Ascending aorta (tissue), 2 donors: ENCODE measurements at regions of chr18 and their contacts with region 1.

Region 1: DNA sequence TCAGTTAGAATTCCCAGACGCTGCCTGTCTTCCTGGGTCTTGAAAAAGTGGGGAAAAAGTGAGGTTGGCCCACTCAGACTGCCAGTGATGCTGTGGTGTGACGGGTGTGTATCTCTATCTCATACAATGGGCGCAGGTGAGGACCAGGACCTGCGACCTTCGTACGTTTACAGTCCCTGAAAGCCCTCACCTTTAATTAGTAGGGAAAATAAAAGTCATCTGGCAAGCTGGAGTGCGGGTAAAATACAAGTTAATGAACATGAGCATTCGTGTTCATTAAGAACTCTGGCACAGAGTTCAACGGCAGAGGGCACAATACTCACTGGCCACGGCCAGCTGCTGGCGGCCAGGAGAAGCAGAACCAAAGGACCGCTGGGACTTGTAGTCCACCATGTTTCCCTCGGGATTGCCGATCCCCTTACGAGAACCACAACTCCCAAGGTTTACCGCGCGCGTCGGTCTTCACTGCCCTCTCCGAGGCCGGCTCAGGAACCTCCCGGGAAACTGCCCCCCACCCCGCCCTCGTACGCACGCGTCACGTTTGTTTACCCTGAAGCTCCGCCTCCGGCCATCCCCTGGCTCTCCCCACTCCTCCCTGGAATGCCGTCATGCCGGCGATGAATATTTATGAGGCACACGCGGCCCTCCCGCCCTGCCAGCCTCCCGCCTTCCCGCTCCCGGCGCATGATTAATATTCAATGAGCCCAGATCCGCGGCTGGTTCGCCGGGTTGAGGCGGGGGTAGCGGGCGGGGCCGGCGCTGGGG is 488 bp upstream of the PHLPP1 start:
- DNase-seq: peak; percentile 98 to 100
- H3K4me3 ChIP-seq: peak overlapping the region; percentile 78 to 81
- H3K27ac ChIP-seq: peak overlapping the region; percentile 93 to 95
- H3K4me1 ChIP-seq: peaks cover 0 to 5% of the 10 kb centered on the region in 2 donors
- H3K27me3 ChIP-seq: no peaks in the 10 kb centered on the region
- CTCF ChIP-seq: peak; percentile 56 to 80 (median 78)

Region 2: DNA sequence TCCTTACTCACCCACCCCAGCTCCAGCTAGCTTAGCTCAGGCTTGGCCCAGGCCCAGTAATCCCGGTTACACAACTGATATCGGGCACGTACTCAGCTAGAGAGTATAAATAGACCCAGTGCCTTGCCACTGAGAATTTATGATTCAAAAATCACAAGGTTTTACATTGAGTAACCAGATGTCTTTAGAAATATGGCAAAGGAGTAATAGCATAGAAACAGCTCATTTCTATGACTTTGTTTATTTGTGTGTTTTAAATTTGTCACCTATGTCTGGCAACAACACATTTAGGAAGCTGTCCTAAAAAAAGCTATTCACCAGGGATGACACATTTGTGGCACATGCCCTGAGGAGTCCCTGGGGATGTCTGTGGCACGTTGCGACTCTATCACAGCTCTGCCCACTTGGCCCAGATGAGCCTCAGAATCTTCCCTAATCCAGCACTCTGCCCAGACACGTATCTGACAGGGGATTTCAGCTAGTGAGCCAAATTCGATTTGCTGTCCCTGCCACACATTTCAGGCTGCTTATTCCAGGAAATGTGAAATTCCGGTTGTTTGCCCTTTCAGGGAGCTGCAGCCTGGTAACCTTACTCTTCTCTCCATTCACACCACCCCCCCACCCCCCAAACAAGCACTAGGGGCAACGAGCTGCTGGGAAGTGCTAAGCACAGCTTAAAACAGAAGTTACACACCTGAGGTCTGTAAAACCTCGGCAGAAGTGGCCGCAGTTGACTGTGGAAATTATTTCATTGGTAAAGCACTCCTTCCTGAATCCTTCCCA is 277.4 kb before region 1 on chr18:
- intact Hi-C with region 1: loop called (anchors 5 kb)
- DNase-seq: peak; percentile 86 to 98
- H3K4me3 ChIP-seq: peak overlapping the region; percentile 39 to 52
- H3K27ac ChIP-seq: peak overlapping the region; percentile 85 to 94
- H3K4me1 ChIP-seq: peaks cover 4 to 19% of the 10 kb centered on the region in 2 donors
- H3K27me3 ChIP-seq: no peaks in the 10 kb centered on the region
- CTCF ChIP-seq: no peak

Region 3: GRCh38 chr18:62784966-62785413 is 70.1 kb after region 1 on chr18:
- intact Hi-C with region 1: no loop called
- DNase-seq: no peak
- H3K4me3 ChIP-seq: no peak overlapping the region
- H3K27ac ChIP-seq: no peak overlapping the region
- H3K4me1 ChIP-seq: no peaks in the 10 kb centered on the region
- H3K27me3 ChIP-seq: no peaks in the 10 kb centered on the region
- CTCF ChIP-seq: no peak

Region 4: DNA sequence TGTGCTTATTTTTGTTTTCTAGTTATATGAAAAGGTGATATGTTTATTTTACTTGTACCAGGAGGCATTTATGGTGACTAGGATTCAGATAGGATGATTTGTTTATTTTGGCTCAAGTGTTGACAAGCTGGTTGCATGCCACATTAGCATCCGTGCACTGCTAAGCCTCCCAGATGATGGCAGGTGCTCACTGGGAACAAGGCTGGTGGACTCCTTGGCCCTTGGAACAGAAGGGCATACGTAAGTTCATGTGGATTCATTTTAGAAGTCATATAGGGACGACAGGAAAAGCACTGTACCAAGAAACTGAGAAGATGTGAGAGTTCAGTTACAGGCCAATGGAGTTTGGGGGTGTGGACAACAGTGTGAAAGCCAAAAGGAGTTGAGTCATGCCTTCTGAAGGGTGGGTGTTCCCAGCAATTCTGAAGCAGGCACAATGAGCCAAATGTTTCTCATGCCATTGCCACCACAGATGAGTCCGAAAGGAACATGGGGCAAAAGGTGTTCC is 166.7 kb after region 1 on chr18:
- intact Hi-C with region 1: loop called (anchors 5 kb)
- DNase-seq: peak in 1 of 2 donors; percentile 73
- H3K4me3 ChIP-seq: no peak overlapping the region
- H3K27ac ChIP-seq: no peak overlapping the region
- H3K4me1 ChIP-seq: peaks cover 0 to 2% of the 10 kb centered on the region in 2 donors
- H3K27me3 ChIP-seq: no peaks in the 10 kb centered on the region
- CTCF ChIP-seq: no peak

Region 5: GRCh38 chr18:62982600-62983251 is 267.9 kb after region 1 on chr18:
- intact Hi-C with region 1: loop called (anchors 1 kb)
- DNase-seq: no peak
- H3K4me3 ChIP-seq: peak overlapping the region in 1 of 2 donors; percentile 57
- H3K27ac ChIP-seq: no peak overlapping the region
- H3K4me1 ChIP-seq: no peaks in the 10 kb centered on the region
- H3K27me3 ChIP-seq: no peaks in the 10 kb centered on the region
- CTCF ChIP-seq: peak; percentile 65 to 78 (median 68)

Region 6: GRCh38 chr18:63367053-63367953 is 652.5 kb after region 1 on chr18 and contains the start of gene KDSR:
- intact Hi-C with region 1: loop called (anchors 1 kb)
- DNase-seq: peak; percentile 85 to 98
- H3K4me3 ChIP-seq: peak within 1 kb of the TSS; percentile 87 to 92
- H3K27ac ChIP-seq: peak within 1 kb of the TSS; percentile 98
- H3K4me1 ChIP-seq: peaks cover 2 to 19% of the 10 kb centered on the region in 2 donors
- H3K27me3 ChIP-seq: no peaks in the 10 kb centered on the region
- CTCF ChIP-seq: no peak
- total RNA-seq, gene KDSR: 208 TPM

Region 7: GRCh38 chr18:63969960-63970802 is 1255.3 kb after region 1 on chr18 and contains the start of gene SERPINB8:
- intact Hi-C with region 1: loop called (anchors 2 kb)
- DNase-seq: peak; percentile 76 to 98
- H3K4me3 ChIP-seq: peak within 1 kb of the TSS; percentile 77 to 80
- H3K27ac ChIP-seq: peak within 1 kb of the TSS; percentile 97 to 99
- H3K4me1 ChIP-seq: peaks cover 0 to 4% of the 10 kb centered on the region in 2 donors
- H3K27me3 ChIP-seq: no peaks in the 10 kb centered on the region
- CTCF ChIP-seq: no peak
- total RNA-seq, gene SERPINB8: 4.5 TPM